Activated naive CD4-positive, alpha-beta T cell treated with anti-CD3 and anti-CD28 coated beads for 36 hours (primary cell): ENCODE measurements at regions of chr7 and their contacts with region 1.

Region 1: DNA sequence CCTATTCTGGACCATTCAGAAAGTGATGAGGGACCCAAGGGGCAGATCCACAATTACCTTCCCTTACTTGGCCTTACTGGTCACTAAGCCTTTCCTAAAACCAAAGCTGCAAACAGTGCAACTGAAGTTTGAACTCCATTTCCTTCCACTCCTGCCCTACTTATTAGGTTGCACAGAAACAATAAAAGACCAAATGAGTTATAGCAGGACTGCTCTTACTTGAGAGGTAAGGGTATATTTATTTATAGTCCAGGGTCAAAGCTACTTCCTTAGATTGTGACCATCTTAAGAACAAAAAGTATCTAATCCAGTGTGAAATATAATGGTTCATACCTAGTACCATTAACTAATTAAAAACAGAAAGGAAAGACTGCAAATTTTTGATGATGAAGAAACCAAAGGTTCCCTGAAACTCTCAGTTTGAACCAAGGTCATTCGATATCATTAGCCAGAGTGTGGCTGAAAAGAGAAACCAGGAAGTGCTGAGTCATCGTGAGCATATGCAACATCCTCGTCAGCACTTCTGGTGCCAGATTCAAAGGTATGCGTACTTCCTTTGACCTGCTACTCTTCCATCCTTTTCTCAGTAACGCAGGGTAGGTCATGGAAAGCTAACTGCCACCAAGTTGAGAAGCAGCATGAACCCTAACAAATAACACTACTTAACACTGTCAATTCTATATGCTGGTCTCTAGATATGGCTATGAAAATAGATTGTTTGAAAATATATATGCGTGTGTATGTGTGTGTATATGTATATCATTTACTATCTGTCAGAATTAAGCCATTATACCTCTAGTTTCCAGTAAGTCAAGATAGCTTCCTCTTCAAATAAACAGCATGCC is 26.8 kb downstream of the CDK6 start:
- DNase-seq: peak; percentile 78
- H3K4me3 Mint-ChIP-seq: no peak overlapping the region
- H3K27ac Mint-ChIP-seq: peak overlapping the region; percentile 54
- H3K4me1 Mint-ChIP-seq: peaks cover 72% of the 10 kb centered on the region
- H3K27me3 Mint-ChIP-seq: no peaks in the 10 kb centered on the region

Region 2: DNA sequence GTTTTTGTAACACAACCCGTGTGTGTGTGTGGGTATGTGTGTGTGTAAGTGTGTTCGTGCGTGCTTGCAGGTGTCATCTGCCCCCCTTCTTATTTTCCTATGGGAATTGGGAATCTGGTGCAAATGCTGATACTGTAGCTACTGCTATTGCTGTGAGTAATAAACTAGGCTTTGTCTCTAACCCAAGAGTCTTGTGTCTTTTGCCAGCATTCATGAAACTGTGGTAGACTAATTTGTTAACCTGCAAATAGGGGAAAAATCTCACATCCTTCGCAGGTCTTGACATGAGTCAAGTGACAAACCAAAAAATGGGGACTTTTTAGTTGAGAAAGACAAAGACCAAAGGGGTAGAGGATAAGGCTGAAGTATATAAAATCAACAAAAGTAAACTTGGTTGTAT is 161.6 kb before region 1 on chr7:
- CTCF ChIA-PET with region 1: no interaction called
- intact Hi-C with region 1: loop called (anchors 1 kb)
- DNase-seq: no peak
- H3K4me3 Mint-ChIP-seq: no peak overlapping the region
- H3K27ac Mint-ChIP-seq: peak overlapping the region; percentile 88
- H3K4me1 Mint-ChIP-seq: peaks cover 89% of the 10 kb centered on the region
- H3K27me3 Mint-ChIP-seq: no peaks in the 10 kb centered on the region

Region 3: DNA sequence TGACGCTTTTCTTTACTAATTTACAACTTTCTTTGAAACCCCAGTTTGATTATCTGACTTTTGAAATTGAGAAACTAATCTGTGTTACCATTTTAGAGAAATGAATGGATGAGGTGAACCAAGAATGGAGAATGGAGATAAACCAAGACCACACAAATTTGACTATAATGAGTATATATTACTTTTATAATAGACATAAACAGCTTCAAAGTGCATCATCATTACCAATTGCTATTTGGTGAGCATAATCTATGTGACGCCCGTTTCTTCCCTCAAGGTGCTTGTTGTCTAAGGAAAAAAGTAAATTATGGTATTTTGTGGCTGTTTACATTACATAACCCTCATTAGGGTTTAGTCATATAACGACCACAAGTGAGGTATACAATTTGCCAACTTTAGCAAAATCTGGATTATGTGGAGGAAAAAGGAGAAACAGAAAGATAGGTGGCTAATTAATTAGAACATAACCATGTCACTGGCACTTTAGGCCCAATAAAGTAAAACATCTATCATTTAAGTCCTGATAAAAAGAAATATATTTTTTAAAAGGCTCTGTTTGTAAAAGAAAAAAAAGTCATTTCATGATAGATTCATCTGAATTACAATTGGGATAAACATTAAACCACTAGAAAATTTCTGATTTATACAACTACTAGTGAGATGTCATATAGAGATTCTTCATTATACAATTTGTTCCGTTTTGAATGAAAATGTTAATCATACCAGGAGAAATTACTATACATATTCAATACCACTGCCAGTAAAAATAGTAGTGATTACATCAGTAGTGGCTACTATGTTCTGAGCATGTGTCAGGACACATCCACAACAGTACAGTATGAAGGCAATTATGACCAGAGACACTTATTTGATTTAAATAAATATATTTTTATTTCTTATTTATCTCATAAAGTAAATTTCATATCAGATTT is 101.2 kb before region 1 on chr7:
- CTCF ChIA-PET with region 1: no interaction called
- intact Hi-C with region 1: loop called (anchors 1 kb)
- DNase-seq: no peak
- H3K4me3 Mint-ChIP-seq: no peak overlapping the region
- H3K27ac Mint-ChIP-seq: peak overlapping the region; percentile 89
- H3K4me1 Mint-ChIP-seq: peaks cover 52% of the 10 kb centered on the region
- H3K27me3 Mint-ChIP-seq: no peaks in the 10 kb centered on the region

Region 4: GRCh38 chr7:92768501-92769393 is 40.9 kb before region 1 on chr7:
- CTCF ChIA-PET with region 1: interaction called, 4 read pairs
- intact Hi-C with region 1: loop called (anchors 1 kb)
- DNase-seq: peak; percentile 76
- H3K4me3 Mint-ChIP-seq: peak overlapping the region; percentile 48
- H3K27ac Mint-ChIP-seq: peak overlapping the region; percentile 92
- H3K4me1 Mint-ChIP-seq: peaks cover 70% of the 10 kb centered on the region
- H3K27me3 Mint-ChIP-seq: no peaks in the 10 kb centered on the region

Region 5: GRCh38 chr7:92854501-92855238 is 45.1 kb after region 1 on chr7:
- CTCF ChIA-PET with region 1: no interaction called
- intact Hi-C with region 1: loop called (anchors 1 kb)
- DNase-seq: peak; percentile 39
- H3K4me3 Mint-ChIP-seq: no peak overlapping the region
- H3K27ac Mint-ChIP-seq: peak overlapping the region; percentile 46
- H3K4me1 Mint-ChIP-seq: peaks cover 16% of the 10 kb centered on the region
- H3K27me3 Mint-ChIP-seq: peaks cover 6% of the 10 kb centered on the region

Region 6: GRCh38 chr7:92875719-92876118 is 66.1 kb after region 1 on chr7:
- CTCF ChIA-PET with region 1: no interaction called
- intact Hi-C with region 1: no loop called
- DNase-seq: peak; percentile 39
- H3K4me3 Mint-ChIP-seq: no peak overlapping the region
- H3K27ac Mint-ChIP-seq: no peak overlapping the region
- H3K4me1 Mint-ChIP-seq: peaks cover 35% of the 10 kb centered on the region
- H3K27me3 Mint-ChIP-seq: peaks cover 17% of the 10 kb centered on the region

Region 7: DNA sequence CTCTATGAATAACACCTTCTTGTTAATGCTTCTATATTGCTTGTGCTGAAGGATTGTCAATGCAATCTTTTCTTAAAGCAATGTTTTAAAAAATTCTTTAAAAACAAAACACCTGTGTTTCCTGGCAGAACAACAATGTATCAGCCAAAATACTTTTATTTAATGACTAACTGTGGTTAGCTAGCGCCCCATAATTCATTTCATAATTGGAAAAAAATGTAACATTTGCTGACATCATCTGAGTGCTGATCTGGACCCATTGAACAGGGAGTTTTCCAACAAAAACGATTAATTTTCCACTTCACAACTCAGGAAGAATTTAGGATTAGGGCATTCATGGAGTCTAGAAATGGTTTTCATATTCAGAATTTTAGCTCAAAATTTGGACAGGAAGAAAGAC is 164.4 kb after region 1 on chr7:
- CTCF ChIA-PET with region 1: no interaction called
- intact Hi-C with region 1: no loop called
- DNase-seq: no peak
- H3K4me3 Mint-ChIP-seq: no peak overlapping the region
- H3K27ac Mint-ChIP-seq: no peak overlapping the region
- H3K4me1 Mint-ChIP-seq: peaks cover 17% of the 10 kb centered on the region
- H3K27me3 Mint-ChIP-seq: peaks cover 10% of the 10 kb centered on the region